ENCODE measurements at regions of chr18 and their contacts with region 1.

Region 1: DNA sequence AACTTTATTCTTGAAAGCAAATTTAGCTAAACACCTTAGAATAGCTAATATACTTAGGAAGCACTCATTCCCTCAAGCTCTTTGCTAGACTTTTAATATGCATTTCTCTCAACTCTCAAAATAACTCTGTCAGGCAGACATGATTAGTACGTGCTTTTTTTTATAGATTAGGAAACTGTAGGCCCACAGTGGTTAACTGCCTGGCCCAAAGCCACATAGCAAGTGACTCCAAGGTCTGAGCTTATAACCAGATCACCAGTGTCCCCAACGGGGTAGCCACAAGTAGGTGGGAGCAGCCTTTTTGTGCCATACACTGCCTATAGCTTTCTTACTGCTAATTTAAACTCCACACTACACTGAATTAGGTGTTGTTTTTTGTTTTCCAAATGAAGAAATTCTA is 576.8 kb downstream of the METTL4 start:
- ATAC-seq: no peak
- H3K4me3 ChIP-seq: no peak overlapping the region
- H3K27ac ChIP-seq: no peak overlapping the region
- H3K4me1 ChIP-seq: no peaks in the 10 kb centered on the region

Region 2: GRCh38 chr18:1895456-1896185 is 98.8 kb before region 1 on chr18:
- in situ Hi-C with region 1: loop called in 1 of 9 experiments (anchors 5 kb)
- ATAC-seq: peak in 1 of 8 experiments; percentile 48
- H3K4me3 ChIP-seq: no peak overlapping the region
- H3K27ac ChIP-seq: no peak overlapping the region
- H3K4me1 ChIP-seq: no peaks in the 10 kb centered on the region

Measured in motor neuron (in vitro differentiated cells).